ENCODE measurements at regions of chr15 and their contacts with region 1.

Region 1: DNA sequence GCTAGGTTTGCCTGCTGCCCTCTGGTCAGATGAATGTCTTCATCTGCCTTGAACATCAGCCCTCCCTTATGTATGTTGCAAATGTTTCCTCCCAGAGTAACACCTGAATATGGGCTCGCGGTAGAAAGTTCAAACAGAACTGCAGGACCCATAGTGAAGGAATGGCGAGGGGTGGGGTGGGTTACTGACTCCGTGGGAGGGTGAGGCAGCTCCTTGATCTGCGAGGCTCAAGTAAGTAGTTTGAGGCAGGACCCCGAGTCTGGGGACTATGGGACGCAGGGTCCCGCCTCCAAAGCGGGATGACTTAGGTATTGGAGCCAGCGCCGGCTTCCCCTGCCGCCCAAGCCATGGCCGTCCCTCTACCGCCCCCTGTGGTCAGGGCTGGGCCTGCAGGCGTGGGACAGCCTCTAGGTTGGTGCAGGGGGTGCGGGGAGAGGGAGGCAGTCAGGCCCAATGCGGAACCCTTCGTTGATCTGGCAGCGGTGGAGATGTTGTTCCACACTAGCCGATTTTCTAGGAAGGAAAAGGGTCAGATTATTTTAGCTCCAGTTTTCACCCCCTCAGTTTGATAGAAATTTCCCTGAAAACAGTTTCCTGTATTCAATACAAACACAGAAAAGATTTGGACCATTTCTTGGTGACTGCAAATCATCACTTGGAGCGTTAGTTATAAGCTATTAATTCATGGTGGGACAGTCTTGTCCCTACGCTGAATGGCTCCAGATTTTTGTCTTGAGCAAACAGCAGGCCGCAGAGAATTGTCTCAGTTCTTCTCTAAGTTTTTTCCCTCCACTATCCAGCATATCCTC is 72.3 kb downstream of the CORO2B start:
- DNase-seq: peak; percentile 52
- ATAC-seq: peak; percentile 71
- H3K4me3 Mint-ChIP-seq: no peak overlapping the region
- H3K27ac Mint-ChIP-seq: no peak overlapping the region
- H3K4me1 Mint-ChIP-seq: no peaks in the 10 kb centered on the region
- H3K27me3 Mint-ChIP-seq: no peaks in the 10 kb centered on the region
- CTCF ChIP-seq: peak; percentile 64

Region 2: DNA sequence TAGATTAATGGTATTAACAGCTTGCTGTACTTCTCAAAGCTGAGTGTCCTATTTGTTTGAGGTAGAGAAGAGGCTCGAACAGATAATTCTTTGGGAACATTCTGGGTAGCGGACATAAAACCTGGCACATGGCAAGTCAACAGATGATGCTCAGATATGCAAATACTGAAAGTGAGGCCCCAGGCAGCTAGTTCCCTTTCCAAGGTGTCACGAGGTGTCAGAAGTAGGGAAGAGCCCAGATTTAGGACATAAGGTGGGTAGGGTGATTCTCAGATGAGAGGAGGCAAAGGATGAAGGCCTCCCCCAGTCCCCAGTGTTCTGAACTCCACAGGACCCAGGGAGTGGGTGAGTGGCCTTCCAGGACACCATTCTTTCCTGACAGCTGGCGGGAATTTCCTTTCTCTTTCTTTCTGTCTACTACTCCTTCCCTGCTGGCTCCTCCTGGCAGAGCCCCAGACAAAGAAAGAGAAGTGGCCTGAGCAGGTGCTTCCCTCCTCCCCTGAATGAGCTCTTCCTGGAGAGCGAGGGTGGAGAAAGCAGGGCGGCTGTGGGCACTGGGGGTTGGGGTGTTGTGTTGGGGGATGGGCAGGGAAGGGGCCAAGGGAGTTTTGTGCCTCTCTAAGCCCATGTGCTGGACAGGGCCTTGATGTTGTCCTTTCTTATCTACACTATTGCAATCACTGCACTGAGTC is 15.2 kb after region 1 on chr15:
- CTCF ChIA-PET with region 1: interaction called, 12 read pairs
- POLR2A ChIA-PET with region 1: no interaction called
- intact Hi-C with region 1: no loop called
- DNase-seq: no peak
- ATAC-seq: no peak
- H3K4me3 Mint-ChIP-seq: no peak overlapping the region
- H3K27ac Mint-ChIP-seq: no peak overlapping the region
- H3K4me1 Mint-ChIP-seq: no peaks in the 10 kb centered on the region
- H3K27me3 Mint-ChIP-seq: peaks cover 1% of the 10 kb centered on the region
- CTCF ChIP-seq: no peak

Region 3: GRCh38 chr15:68991723-68992122 is 340.6 kb after region 1 on chr15:
- CTCF ChIA-PET with region 1: no interaction called
- POLR2A ChIA-PET with region 1: no interaction called
- intact Hi-C with region 1: no loop called
- DNase-seq: no peak
- ATAC-seq: no peak
- H3K4me3 Mint-ChIP-seq: no peak overlapping the region
- H3K27ac Mint-ChIP-seq: no peak overlapping the region
- H3K4me1 Mint-ChIP-seq: no peaks in the 10 kb centered on the region
- H3K27me3 Mint-ChIP-seq: no peaks in the 10 kb centered on the region
- CTCF ChIP-seq: no peak

Measured in activated CD8-positive, alpha-beta T cell treated with anti-CD3 and anti-CD28 coated beads for 36 hours (primary cell).